ENCODE measurements at regions of chr1 and their contacts with region 1.

Region 1: GRCh38 chr1:159891275-159892157 is 8.4 kb downstream of the CFAP45 start:
- DNase-seq: peak; percentile 96
- H3K4me3 Mint-ChIP-seq: no peak overlapping the region
- H3K27ac Mint-ChIP-seq: peak overlapping the region; percentile 28
- H3K4me1 Mint-ChIP-seq: peaks cover 19% of the 10 kb centered on the region
- H3K27me3 Mint-ChIP-seq: no peaks in the 10 kb centered on the region
- CTCF ChIP-seq: peak; percentile 100

Region 2: GRCh38 chr1:159197561-159198557 is 693.7 kb before region 1 on chr1:
- CTCF ChIA-PET with region 1: interaction called, 76 read pairs
- POLR2A ChIA-PET with region 1: no interaction called
- intact Hi-C with region 1: loop called (anchors 1 kb)
- DNase-seq: peak; percentile 88
- H3K4me3 Mint-ChIP-seq: no peak overlapping the region
- H3K27ac Mint-ChIP-seq: no peak overlapping the region
- H3K4me1 Mint-ChIP-seq: peaks cover 32% of the 10 kb centered on the region
- H3K27me3 Mint-ChIP-seq: no peaks in the 10 kb centered on the region
- CTCF ChIP-seq: peak; percentile 95

Region 3: GRCh38 chr1:159821171-159821867 is 70.2 kb before region 1 on chr1:
- CTCF ChIA-PET with region 1: interaction called, 1,396 read pairs
- POLR2A ChIA-PET with region 1: no interaction called
- intact Hi-C with region 1: no loop called
- DNase-seq: no peak
- H3K4me3 Mint-ChIP-seq: no peak overlapping the region
- H3K27ac Mint-ChIP-seq: no peak overlapping the region
- H3K4me1 Mint-ChIP-seq: peaks cover 14% of the 10 kb centered on the region
- H3K27me3 Mint-ChIP-seq: peaks cover 16% of the 10 kb centered on the region
- CTCF ChIP-seq: no peak

Region 4: DNA sequence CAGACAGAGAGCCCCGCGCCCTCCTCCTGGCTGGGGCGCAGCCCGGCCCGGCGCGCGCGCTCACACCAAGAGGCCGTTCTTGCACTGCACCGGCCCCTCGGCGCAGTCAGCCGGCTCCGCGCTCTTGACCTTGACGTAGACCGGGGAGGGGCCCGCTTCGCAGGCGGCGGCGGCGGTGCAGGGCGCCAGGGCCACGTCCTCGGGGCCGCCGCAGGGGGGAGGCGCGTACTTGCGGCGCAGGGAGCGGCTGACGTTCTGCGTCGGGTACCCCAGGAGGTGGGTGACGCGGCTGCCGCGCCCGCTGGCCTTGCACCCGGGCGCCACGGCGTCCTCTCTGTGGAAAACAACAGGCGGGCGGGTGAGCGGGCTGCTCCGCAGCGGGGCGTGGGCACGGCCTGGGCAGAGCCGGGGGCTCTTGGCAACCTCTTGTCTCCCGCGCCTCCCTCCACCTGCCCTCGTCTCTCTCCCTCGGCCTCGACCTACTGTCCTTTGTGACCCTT is 36.8 kb before region 1 on chr1:
- CTCF ChIA-PET with region 1: interaction called, 98 read pairs
- POLR2A ChIA-PET with region 1: interaction called, 6 read pairs
- intact Hi-C with region 1: loop called (anchors 1 kb)
- DNase-seq: peak; percentile 88
- H3K4me3 Mint-ChIP-seq: peak overlapping the region; percentile 77
- H3K27ac Mint-ChIP-seq: peak overlapping the region; percentile 61
- H3K4me1 Mint-ChIP-seq: peaks cover 29% of the 10 kb centered on the region
- H3K27me3 Mint-ChIP-seq: no peaks in the 10 kb centered on the region
- CTCF ChIP-seq: no peak

Region 5: DNA sequence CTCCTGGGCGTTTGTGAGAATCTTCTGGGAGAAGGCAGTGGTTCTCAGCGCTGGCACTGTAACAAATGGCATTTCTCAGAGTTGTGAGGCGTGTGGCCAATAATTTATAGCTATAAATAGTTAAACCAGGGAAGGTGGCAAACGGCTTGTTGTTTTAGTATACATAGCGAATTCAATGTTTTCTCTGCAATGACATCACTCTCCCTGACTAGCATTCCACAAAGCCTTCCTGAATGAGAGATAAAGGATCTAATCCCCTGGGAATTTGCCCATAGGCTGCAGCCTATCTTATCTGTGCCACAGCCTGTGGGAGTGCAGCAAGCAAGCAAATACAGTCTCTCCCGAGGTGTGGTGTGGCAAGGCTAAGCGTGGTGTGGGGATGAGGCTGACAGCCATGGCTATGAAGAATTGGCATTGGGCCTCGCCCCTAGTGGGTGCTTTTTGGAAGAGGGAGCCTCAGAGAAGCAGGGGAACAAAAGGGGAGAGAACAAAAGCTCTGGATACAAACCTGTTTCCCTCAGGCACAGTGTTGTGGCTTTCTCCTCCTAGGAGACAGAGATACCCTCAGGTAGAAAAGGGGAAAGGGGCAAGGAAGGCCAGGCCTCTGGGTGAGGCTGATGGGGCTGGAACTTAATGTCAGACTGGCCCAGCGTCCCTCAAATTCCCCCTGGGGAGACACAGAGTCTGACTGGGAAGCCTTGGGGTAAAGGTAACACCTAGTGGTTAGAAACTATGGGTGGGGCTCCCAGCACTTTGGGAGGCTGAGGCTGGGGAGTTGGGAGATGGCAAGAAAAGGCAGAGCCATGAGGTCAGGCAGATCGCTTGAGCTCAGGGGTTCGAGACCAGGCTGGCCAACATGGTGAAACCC is 24.9 kb after region 1 on chr1:
- CTCF ChIA-PET with region 1: interaction called, 97 read pairs
- POLR2A ChIA-PET with region 1: interaction called, 5 read pairs
- intact Hi-C with region 1: no loop called
- DNase-seq: peak; percentile 67
- H3K4me3 Mint-ChIP-seq: no peak overlapping the region
- H3K27ac Mint-ChIP-seq: peak overlapping the region; percentile 39
- H3K4me1 Mint-ChIP-seq: peaks cover 62% of the 10 kb centered on the region
- H3K27me3 Mint-ChIP-seq: no peaks in the 10 kb centered on the region
- CTCF ChIP-seq: no peak

Region 6: DNA sequence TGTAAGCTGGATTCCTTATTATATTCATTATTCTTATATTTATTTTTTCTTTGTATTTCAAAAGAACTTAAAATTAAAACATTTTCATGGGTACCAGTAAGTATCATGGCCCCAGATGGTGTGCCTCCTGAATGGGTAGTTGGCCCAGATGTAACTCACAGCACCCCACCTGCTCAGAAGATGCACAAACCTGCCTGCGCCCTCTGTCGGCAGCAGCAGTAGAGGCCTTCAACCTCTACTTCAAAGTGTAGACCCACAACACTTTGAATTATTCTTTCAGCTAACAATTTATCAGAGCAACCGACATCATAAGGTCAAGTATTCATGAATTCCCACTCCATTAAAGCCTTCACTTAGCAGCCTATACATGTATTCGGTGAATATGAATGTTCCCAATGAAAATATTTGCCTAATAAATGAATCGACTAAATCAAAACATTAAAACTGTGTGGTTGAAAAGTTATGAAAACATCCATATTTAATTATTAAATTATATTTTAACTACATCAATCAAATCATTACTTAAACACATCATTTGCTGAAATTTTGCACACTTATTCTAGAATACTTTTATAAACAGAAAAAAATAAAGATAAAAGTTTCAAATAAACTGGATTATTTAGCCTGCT is 114.9 kb after region 1 on chr1:
- CTCF ChIA-PET with region 1: interaction called, 467 read pairs
- POLR2A ChIA-PET with region 1: interaction called, 5 read pairs
- intact Hi-C with region 1: loop called (anchors 1 kb)
- DNase-seq: peak; percentile 87
- H3K4me3 Mint-ChIP-seq: no peak overlapping the region
- H3K27ac Mint-ChIP-seq: no peak overlapping the region
- H3K4me1 Mint-ChIP-seq: peaks cover 11% of the 10 kb centered on the region
- H3K27me3 Mint-ChIP-seq: no peaks in the 10 kb centered on the region
- CTCF ChIP-seq: peak; percentile 99

Region 7: GRCh38 chr1:160437432-160438316 is 546.2 kb after region 1 on chr1:
- CTCF ChIA-PET with region 1: no interaction called
- POLR2A ChIA-PET with region 1: no interaction called
- intact Hi-C with region 1: no loop called
- DNase-seq: no peak
- H3K4me3 Mint-ChIP-seq: no peak overlapping the region
- H3K27ac Mint-ChIP-seq: no peak overlapping the region
- H3K4me1 Mint-ChIP-seq: no peaks in the 10 kb centered on the region
- H3K27me3 Mint-ChIP-seq: peaks cover 43% of the 10 kb centered on the region
- CTCF ChIP-seq: no peak